ENCODE measurements at regions of chr15 and their contacts with region 1.

Region 1: GRCh38 chr15:73284090-73284716 is 84.6 kb downstream of the HCN4 start:
- DNase-seq: no peak
- H3K4me3 ChIP-seq: no peak overlapping the region
- H3K27ac ChIP-seq: peak overlapping the region in 1 of 4 donors; percentile 58
- H3K4me1 ChIP-seq: peaks cover 0 to 48% (median 34%) of the 10 kb centered on the region in 4 donors
- H3K27me3 ChIP-seq: no peaks in the 10 kb centered on the region
- CTCF ChIP-seq: peak; percentile 23 to 43 (median 26)
- EP300 ChIP-seq: no peak
- POLR2A ChIP-seq: no peak

Region 2: DNA sequence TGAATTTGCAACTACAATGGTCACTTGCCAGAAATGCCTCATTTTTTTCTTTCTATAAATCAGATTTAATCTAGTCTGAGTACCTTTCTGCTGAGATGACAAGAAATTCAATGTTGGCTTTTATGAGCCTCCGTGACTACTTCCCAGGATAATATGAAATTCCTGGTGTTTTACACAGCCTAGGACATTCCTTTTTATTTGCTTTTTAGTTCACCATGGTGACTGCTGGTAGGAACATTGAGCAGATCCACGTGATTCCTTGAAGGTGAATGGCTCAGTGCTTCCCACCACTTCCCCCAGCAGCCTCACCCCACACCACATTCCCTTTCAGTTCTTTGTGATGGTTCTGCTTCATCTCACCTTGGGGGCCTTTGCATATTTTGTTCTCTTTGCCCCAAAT is 353.3 kb after region 1 on chr15:
- intact Hi-C with region 1: loop called (anchors 2 kb)
- DNase-seq: no peak
- H3K4me3 ChIP-seq: no peak overlapping the region
- H3K27ac ChIP-seq: no peak overlapping the region
- H3K4me1 ChIP-seq: peaks cover 8 to 21% (median 13%) of the 10 kb centered on the region in 4 donors
- H3K27me3 ChIP-seq: no peaks in the 10 kb centered on the region
- CTCF ChIP-seq: no peak
- EP300 ChIP-seq: no peak
- POLR2A ChIP-seq: no peak